ENCODE measurements at regions of chr9 and their contacts with region 1.

Region 1: GRCh38 chr9:20356403-20357035 is 265.8 kb downstream of the MLLT3 start:
- DNase-seq: peak; percentile 29
- H3K4me3 Mint-ChIP-seq: no peak overlapping the region
- H3K27ac Mint-ChIP-seq: peak overlapping the region; percentile 40
- H3K4me1 Mint-ChIP-seq: peaks cover 86% of the 10 kb centered on the region
- H3K27me3 Mint-ChIP-seq: no peaks in the 10 kb centered on the region

Region 2: DNA sequence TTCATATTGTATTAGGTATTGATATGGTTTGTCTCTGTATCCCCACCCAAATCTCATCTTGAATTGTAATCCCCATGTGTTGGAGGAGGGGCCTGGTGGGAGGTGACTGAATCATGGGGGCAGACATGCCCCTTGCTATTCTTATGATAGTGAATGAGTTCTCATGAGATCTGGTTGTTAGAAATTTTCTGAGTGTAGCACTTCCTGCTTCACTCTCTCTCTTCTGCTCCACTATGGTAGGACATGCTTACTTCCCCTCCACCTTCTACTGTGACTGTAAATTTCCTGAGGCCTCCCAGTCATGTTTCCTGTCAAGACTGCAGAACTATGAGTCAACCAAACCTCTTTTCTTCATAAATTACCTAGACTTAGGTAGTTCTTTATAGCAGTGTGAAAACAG is 380.3 kb before region 1 on chr9:
- intact Hi-C with region 1: loop called (anchors 1 kb)
- DNase-seq: peak; percentile 47
- H3K4me3 Mint-ChIP-seq: peak overlapping the region; percentile 1
- H3K27ac Mint-ChIP-seq: peak overlapping the region; percentile 92
- H3K4me1 Mint-ChIP-seq: peaks cover 51% of the 10 kb centered on the region
- H3K27me3 Mint-ChIP-seq: no peaks in the 10 kb centered on the region

Region 3: DNA sequence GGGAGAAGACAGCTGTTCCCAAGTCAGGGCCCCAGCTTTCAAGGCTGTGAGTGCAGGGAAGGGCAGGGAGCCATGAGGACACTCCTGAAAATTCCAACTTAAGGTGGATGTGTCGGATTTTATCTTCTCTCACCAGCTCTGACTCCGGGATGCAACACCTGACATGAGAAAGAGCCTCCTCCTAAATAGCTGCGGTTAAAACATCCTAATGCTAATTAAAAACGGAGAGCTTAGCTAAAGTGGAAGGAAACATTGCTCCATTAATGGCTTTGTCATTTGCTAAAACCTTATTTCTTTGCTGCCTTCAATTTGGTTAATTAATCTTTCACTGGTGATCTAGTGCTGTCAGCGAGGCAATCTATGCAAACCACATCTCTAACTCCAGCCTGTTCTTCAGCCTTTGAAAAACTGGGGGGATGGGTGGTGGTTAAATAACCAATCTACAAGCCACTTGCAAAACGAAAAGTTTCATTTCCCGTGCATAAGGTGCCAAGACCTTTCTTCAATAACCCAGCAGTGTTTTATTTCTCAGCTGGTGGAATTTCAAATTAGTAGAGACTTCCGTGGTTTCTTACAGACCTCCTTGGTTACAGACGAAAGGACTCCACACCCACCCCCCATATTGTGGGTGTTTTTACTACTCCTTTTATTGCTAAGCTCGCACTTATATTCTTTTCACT is 113.9 kb before region 1 on chr9:
- intact Hi-C with region 1: loop called (anchors 1 kb)
- DNase-seq: peak; percentile 36
- H3K4me3 Mint-ChIP-seq: peak overlapping the region; percentile 36
- H3K27ac Mint-ChIP-seq: peak overlapping the region; percentile 27
- H3K4me1 Mint-ChIP-seq: peaks cover 65% of the 10 kb centered on the region
- H3K27me3 Mint-ChIP-seq: peaks cover 2% of the 10 kb centered on the region

Region 4: DNA sequence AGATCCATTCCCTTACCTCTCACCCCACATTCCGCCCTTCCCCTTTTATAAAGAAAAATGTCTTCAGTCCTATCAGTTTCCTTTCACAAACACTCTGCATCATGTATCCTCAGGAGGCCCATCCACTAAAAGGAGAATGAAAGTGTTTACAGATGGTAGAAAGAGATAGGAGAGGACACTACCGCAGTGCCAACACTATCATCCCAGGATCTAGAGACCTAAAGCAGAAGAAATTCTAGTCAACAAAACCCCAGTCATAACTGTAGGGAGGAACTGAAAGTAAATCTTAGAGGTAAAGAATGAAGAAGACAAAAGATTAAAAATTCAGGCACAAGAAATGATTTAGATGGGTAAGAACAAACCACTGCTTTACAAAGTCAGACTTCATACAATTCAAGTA is 151.7 kb after region 1 on chr9:
- intact Hi-C with region 1: loop called (anchors 1 kb)
- DNase-seq: peak; percentile 30
- H3K4me3 Mint-ChIP-seq: peak overlapping the region; percentile 13
- H3K27ac Mint-ChIP-seq: peak overlapping the region; percentile 5
- H3K4me1 Mint-ChIP-seq: peaks cover 77% of the 10 kb centered on the region
- H3K27me3 Mint-ChIP-seq: no peaks in the 10 kb centered on the region

Region 5: GRCh38 chr9:20929276-20929675 is 572.8 kb after region 1 on chr9:
- intact Hi-C with region 1: loop called (anchors 5 kb)
- DNase-seq: no peak
- H3K4me3 Mint-ChIP-seq: no peak overlapping the region
- H3K27ac Mint-ChIP-seq: no peak overlapping the region
- H3K4me1 Mint-ChIP-seq: peaks cover 30% of the 10 kb centered on the region
- H3K27me3 Mint-ChIP-seq: peaks cover 1% of the 10 kb centered on the region

Region 6: GRCh38 chr9:21110708-21111576 is 754.4 kb after region 1 on chr9:
- intact Hi-C with region 1: loop called (anchors 5 kb)
- DNase-seq: no peak
- H3K4me3 Mint-ChIP-seq: no peak overlapping the region
- H3K27ac Mint-ChIP-seq: no peak overlapping the region
- H3K4me1 Mint-ChIP-seq: no peaks in the 10 kb centered on the region
- H3K27me3 Mint-ChIP-seq: peaks cover 9% of the 10 kb centered on the region

Measured in activated T-helper 1 cell treated with anti-CD3 and anti-CD28 coated beads, Interleukin-12 subunit alpha, Interleukin-12 subunit beta, Interleukin-2, Interleukin-4 antibody, amounts not matched to agents 30 ng/mL and 10 ng/mL and 1 ng/mL, durations not matched to agents 14 hours and 24 hours and 36 hours (primary cell).